PC-9 (cell line): ENCODE measurements at regions of chr6 and their contacts with region 1.

Region 1: DNA sequence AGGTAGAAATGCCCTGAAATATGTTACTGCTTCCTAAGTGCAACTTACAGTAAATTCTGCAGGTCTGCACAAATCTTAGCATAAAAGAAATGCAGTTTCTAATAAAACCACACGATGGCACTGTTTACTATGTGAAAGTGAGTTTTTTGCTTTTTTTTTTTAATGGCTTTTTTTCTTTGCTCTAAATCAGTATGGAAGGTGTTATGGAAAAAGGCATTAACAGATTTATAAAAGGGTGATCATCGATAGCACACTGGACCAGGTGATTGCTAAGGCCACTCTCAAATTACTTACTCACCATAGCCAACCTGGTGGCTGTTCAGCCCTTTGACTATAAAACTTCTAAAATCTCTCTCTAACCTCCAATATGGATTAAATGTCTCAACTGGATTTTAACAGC is 45.8 kb downstream of the AHI1 start:
- DNase-seq: peak in 1 of 2 experiments; percentile 37
- H3K4me3 ChIP-seq: no peak overlapping the region
- H3K27ac ChIP-seq: no peak overlapping the region
- H3K4me1 ChIP-seq: no peaks in the 10 kb centered on the region
- H3K27me3 ChIP-seq: no peaks in the 10 kb centered on the region
- CTCF ChIP-seq: peak; percentile 88

Region 2: GRCh38 chr6:135183532-135184440 is 267.9 kb before region 1 on chr6:
- CTCF ChIA-PET with region 1: interaction called, 11 read pairs
- POLR2A ChIA-PET with region 1: no interaction called
- intact Hi-C with region 1: no loop called
- DNase-seq: peak; percentile 40 to 62
- H3K4me3 ChIP-seq: peak overlapping the region; percentile 68
- H3K27ac ChIP-seq: no peak overlapping the region
- H3K4me1 ChIP-seq: peaks cover 28% of the 10 kb centered on the region
- H3K27me3 ChIP-seq: peaks cover 23% of the 10 kb centered on the region
- CTCF ChIP-seq: peak; percentile 72

Region 3: GRCh38 chr6:135438907-135439535 is 12.7 kb before region 1 on chr6:
- CTCF ChIA-PET with region 1: no interaction called
- POLR2A ChIA-PET with region 1: no interaction called
- intact Hi-C with region 1: no loop called
- DNase-seq: peak in 1 of 2 experiments; percentile 35
- H3K4me3 ChIP-seq: no peak overlapping the region
- H3K27ac ChIP-seq: no peak overlapping the region
- H3K4me1 ChIP-seq: no peaks in the 10 kb centered on the region
- H3K27me3 ChIP-seq: no peaks in the 10 kb centered on the region
- CTCF ChIP-seq: peak; percentile 73

Region 4: DNA sequence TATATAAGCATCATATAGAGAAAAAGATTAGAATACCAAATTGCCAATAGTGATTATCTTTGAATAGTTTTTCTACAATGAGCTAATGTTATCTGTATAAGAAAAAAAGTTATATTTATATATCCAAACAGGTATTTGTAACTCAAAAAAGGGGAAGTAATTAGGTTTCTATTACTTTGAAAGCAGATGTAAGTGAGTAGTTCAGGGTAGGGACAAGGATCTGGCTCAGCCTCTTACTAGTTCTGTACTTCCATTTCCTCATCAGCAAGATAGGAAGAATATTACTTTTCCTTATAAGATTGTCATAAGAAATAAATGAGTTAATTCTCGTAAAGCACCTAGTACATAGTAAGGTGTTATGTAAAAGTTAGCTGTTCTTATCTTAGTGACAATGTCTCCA is 13.6 kb after region 1 on chr6:
- CTCF ChIA-PET with region 1: interaction called, 16 read pairs
- POLR2A ChIA-PET with region 1: no interaction called
- intact Hi-C with region 1: no loop called
- DNase-seq: no peak
- H3K4me3 ChIP-seq: no peak overlapping the region
- H3K27ac ChIP-seq: no peak overlapping the region
- H3K4me1 ChIP-seq: no peaks in the 10 kb centered on the region
- H3K27me3 ChIP-seq: no peaks in the 10 kb centered on the region
- CTCF ChIP-seq: no peak

Region 5: DNA sequence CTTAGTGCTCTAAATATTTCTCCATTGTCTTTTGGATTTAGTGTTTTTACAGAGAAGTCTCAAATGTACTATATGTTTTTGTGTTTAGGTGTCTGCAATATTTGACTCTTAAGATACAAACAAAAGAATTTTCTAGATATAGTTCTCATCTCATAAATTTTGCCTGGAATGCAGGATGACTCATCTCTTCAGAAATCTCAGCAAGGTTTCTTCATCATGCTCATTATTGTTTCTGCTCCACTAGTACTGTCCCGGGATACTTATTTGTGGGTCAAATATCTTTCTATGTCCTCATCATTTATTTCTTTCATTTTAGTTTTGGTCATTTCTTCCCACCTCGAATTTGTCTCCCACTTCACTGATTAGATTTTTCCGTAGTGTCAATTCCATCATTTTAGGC is 36.3 kb after region 1 on chr6:
- CTCF ChIA-PET with region 1: no interaction called
- POLR2A ChIA-PET with region 1: no interaction called
- intact Hi-C with region 1: no loop called
- DNase-seq: peak in 1 of 2 experiments; percentile 73
- H3K4me3 ChIP-seq: no peak overlapping the region
- H3K27ac ChIP-seq: peak overlapping the region; percentile 12; the same call in 1 of the 2 replicates
- H3K4me1 ChIP-seq: peaks cover 10% of the 10 kb centered on the region
- H3K27me3 ChIP-seq: no peaks in the 10 kb centered on the region
- CTCF ChIP-seq: 0 out of 2 replicates have a peak, but pooled peaks have one; percentile 11

Region 6: GRCh38 chr6:136226027-136226673 is 774.5 kb after region 1 on chr6:
- CTCF ChIA-PET with region 1: no interaction called
- POLR2A ChIA-PET with region 1: no interaction called
- intact Hi-C with region 1: loop called (anchors 1 kb)
- DNase-seq: peak; percentile 36 to 52
- H3K4me3 ChIP-seq: peak overlapping the region; percentile 49
- H3K27ac ChIP-seq: peak overlapping the region; percentile 69
- H3K4me1 ChIP-seq: peaks cover 6% of the 10 kb centered on the region
- H3K27me3 ChIP-seq: no peaks in the 10 kb centered on the region
- CTCF ChIP-seq: peak; percentile 100

Region 7: DNA sequence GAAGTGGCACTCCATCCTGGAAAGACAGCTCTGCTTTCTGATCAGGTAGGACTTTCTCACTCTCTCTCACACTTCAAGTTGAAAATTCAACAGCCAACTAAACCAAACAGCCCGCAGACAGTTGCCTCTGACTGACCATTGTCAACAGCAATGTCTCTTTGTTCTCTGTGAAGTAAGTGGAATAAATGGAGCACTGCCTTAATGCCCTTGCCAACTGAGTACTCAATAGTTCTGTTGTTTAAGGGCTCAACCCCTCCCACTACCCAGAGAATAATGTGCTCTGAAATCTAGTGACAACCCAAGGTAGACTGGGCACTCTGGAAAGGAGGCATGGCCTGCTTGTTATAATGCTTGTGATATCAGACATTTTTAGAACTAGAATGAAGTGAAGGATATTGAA is 854.8 kb after region 1 on chr6:
- CTCF ChIA-PET with region 1: interaction called, 10 read pairs
- POLR2A ChIA-PET with region 1: no interaction called
- intact Hi-C with region 1: no loop called
- DNase-seq: no peak
- H3K4me3 ChIP-seq: no peak overlapping the region
- H3K27ac ChIP-seq: no peak overlapping the region
- H3K4me1 ChIP-seq: peaks cover 7% of the 10 kb centered on the region
- H3K27me3 ChIP-seq: no peaks in the 10 kb centered on the region
- CTCF ChIP-seq: no peak

Region 8: GRCh38 chr6:136317021-136317694 is 865.5 kb after region 1 on chr6:
- CTCF ChIA-PET with region 1: interaction called, 3 read pairs
- POLR2A ChIA-PET with region 1: no interaction called
- intact Hi-C with region 1: loop called (anchors 2 kb)
- DNase-seq: peak; percentile 45 to 60
- H3K4me3 ChIP-seq: no peak overlapping the region
- H3K27ac ChIP-seq: no peak overlapping the region
- H3K4me1 ChIP-seq: no peaks in the 10 kb centered on the region
- H3K27me3 ChIP-seq: no peaks in the 10 kb centered on the region
- CTCF ChIP-seq: peak; percentile 94